Esophagus squamous epithelium (tissue), 5 donors: ENCODE measurements at regions of chr6 and their contacts with region 1.

Region 1: DNA sequence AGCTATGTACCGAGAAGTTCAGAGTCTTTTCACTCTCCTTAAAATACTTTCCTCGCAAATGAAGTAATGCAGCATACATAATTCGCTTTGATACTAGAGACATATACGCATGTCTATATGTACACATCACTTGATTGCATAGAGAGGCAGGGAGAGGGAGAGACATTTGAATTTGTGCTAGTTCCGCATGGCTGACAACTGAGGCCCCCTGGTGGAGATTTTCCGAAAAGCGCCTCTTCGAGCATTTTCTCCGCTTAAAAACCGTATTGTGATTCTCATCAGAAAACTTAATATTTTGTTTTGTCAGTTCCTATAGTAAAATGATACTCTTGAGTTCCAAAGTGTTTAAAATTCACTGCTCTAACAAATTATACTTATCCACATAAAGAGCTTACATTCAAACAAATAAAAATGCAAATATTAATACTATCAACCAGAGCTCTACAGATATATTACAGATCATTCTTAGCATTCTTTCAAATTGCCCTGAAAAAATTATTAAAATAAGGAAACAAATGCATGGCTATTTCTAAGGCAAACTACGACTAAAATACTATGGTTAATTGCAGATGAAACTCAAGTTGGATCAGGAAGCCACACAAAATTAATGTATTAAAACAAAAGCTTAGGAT is 637 bp downstream of the MYLK4 start:
- DNase-seq: no peak
- H3K4me3 ChIP-seq: no peak overlapping the region
- H3K27ac ChIP-seq: no peak overlapping the region
- H3K4me1 ChIP-seq: peaks cover 0 to 6% (median 0%) of the 10 kb centered on the region in 3 donors
- H3K27me3 ChIP-seq: no peaks in the 10 kb centered on the region
- CTCF ChIP-seq: peak; percentile 62 to 88 (median 76)
- POLR2A ChIP-seq: no peak

Region 2: GRCh38 chr6:1596088-1596852 is 1153.8 kb before region 1 on chr6:
- intact Hi-C with region 1: loop called (anchors 5 kb)
- DNase-seq: no peak
- H3K4me3 ChIP-seq: peak overlapping the region in 1 of 4 donors; percentile 50
- H3K27ac ChIP-seq: no peak overlapping the region
- H3K4me1 ChIP-seq: peaks cover 0 to 8% (median 7%) of the 10 kb centered on the region in 3 donors
- H3K27me3 ChIP-seq: peaks cover 0 to 95% (median 1%) of the 10 kb centered on the region in 4 donors
- CTCF ChIP-seq: peak; percentile 60 to 95 (median 94)
- POLR2A ChIP-seq: no peak

Region 3: DNA sequence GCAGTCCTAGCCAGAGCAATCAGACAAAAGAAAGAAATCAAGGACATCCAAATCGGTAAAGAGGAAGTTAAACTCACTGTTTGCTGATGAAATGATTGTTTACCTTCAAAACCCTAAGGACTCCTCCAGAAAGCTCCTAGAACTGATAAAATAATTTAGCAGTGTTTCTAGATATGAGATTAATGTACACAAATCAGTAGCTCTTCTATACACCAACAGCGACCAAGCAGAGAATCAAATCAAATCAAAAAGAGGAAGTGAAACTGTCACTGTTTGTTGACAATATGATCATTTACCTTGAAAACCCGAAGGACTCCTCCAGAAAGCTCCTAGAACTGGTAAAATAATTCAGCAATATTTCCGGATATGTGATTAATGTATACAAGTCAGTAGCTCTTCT is 131.3 kb after region 1 on chr6:
- intact Hi-C with region 1: no loop called
- DNase-seq: no peak
- H3K4me3 ChIP-seq: no peak overlapping the region
- H3K27ac ChIP-seq: peak overlapping the region in 1 of 4 donors; percentile 35
- H3K4me1 ChIP-seq: peaks cover 8 to 24% (median 17%) of the 10 kb centered on the region in 3 donors
- H3K27me3 ChIP-seq: no peaks in the 10 kb centered on the region
- CTCF ChIP-seq: no peak
- POLR2A ChIP-seq: no peak